Mammary epithelial cell (primary cell): ENCODE measurements at regions of chr1 and their contacts with region 1.

Region 1: DNA sequence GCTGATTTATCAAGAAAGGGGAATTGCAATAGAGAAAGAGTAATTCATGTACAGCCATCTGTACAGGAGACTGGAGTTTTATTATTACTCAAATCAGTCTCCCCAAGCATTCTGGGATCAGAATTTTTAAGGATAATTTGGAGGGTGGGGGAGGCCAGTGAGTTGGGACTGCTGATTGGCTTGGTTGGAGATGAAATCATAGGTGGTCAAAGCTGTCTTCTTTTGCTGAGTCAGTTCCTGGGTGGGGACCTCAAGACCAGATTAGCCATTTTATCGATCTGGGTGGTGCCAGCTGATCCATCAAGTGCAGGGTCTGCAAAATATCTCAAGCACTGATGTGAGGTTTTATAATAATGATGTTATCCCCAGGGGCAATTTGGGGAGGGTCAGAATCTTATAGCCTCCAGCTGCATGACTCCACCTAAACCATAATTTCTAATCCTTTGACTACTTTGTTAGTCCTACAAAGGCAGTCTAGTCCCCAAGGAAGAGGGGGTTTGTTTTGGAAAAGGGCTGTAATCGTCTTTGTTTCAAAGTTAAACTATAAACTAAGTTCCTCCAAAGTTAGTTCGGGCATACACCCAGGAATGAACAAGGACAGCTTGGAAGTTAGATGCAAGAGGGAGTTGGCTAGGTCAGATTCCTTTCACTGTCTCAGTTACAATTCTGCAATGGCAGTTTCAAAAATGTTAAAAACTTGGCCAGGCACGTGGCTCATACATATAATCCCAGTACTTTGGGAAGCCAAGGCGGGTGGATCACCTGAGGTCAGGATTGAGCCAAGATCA is 16.9 kb upstream of the RAB3B start:
- DNase-seq: no peak
- H3K4me3 ChIP-seq: no peak overlapping the region
- H3K27ac ChIP-seq: no peak overlapping the region
- H3K4me1 ChIP-seq: no peaks in the 10 kb centered on the region
- H3K27me3 ChIP-seq: no peaks in the 10 kb centered on the region
- CTCF ChIP-seq: no peak

Region 2: DNA sequence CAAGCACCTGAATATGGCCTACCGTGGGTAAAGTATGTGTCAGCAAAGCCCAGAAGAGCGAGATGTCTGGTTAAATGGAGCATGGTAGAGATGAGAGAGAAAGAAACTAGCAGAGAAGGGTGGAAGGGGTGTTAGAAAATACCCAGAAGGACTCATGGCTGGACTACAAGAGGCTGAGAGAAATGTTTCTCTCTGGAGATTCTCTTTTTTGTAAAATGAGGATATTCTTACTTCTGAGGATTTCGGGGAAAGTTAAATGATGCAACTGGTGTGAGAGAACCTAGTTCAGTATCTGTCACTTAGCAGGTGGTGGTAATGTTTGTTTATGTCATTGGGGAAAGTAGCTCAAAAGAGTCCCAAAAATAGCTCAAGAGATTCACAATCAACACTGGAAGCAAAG is 481.2 kb before region 1 on chr1:
- CTCF ChIA-PET with region 1: no interaction called
- dilution Hi-C with region 1: no loop called
- in situ Hi-C with region 1: no loop called
- intact Hi-C with region 1: no loop called
- DNase-seq: no peak
- H3K4me3 ChIP-seq: no peak overlapping the region
- H3K27ac ChIP-seq: no peak overlapping the region
- H3K4me1 ChIP-seq: no peaks in the 10 kb centered on the region
- H3K27me3 ChIP-seq: no peaks in the 10 kb centered on the region
- CTCF ChIP-seq: no peak

Region 3: GRCh38 chr1:51549016-51549619 is 458.3 kb before region 1 on chr1:
- CTCF ChIA-PET with region 1: no interaction called
- dilution Hi-C with region 1: no loop called
- in situ Hi-C with region 1: no loop called
- intact Hi-C with region 1: no loop called
- DNase-seq: no peak
- H3K4me3 ChIP-seq: no peak overlapping the region
- H3K27ac ChIP-seq: no peak overlapping the region
- H3K4me1 ChIP-seq: no peaks in the 10 kb centered on the region
- H3K27me3 ChIP-seq: no peaks in the 10 kb centered on the region
- CTCF ChIP-seq: no peak

Region 4: DNA sequence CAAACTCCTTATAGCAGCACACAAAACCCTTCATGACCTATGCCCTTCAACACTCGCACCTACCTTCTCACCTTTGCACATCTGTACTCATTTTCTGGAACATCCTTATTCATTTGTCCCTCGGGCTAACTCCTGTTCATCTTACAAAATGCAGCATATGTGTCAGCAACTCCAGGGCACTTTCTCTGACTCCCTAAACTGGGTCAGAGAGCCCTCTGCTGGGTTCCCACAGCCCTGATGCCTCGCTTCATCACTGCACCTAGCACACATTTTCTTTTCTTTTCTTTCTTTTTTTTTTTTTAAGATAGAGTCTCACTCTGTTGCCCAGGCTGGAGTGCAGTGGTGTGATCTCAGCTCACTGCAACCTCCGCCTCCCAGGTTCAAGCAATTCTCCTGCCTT is 70.9 kb before region 1 on chr1:
- CTCF ChIA-PET with region 1: no interaction called
- dilution Hi-C with region 1: loop called (anchors 5 kb)
- in situ Hi-C with region 1: no loop called
- intact Hi-C with region 1: loop called (anchors 2 kb)
- DNase-seq: no peak
- H3K4me3 ChIP-seq: no peak overlapping the region
- H3K27ac ChIP-seq: no peak overlapping the region
- H3K4me1 ChIP-seq: no peaks in the 10 kb centered on the region
- H3K27me3 ChIP-seq: no peaks in the 10 kb centered on the region
- CTCF ChIP-seq: peak in 1 of 2 donors; percentile 33

Region 5: GRCh38 chr1:52225174-52225573 is 217.8 kb after region 1 on chr1:
- CTCF ChIA-PET with region 1: no interaction called
- dilution Hi-C with region 1: no loop called
- in situ Hi-C with region 1: no loop called
- intact Hi-C with region 1: no loop called
- DNase-seq: no peak
- H3K4me3 ChIP-seq: no peak overlapping the region
- H3K27ac ChIP-seq: no peak overlapping the region
- H3K4me1 ChIP-seq: no peaks in the 10 kb centered on the region
- H3K27me3 ChIP-seq: no peaks in the 10 kb centered on the region
- CTCF ChIP-seq: no peak